ENCODE measurements at regions of chr2 and their contacts with region 1.

Region 1: DNA sequence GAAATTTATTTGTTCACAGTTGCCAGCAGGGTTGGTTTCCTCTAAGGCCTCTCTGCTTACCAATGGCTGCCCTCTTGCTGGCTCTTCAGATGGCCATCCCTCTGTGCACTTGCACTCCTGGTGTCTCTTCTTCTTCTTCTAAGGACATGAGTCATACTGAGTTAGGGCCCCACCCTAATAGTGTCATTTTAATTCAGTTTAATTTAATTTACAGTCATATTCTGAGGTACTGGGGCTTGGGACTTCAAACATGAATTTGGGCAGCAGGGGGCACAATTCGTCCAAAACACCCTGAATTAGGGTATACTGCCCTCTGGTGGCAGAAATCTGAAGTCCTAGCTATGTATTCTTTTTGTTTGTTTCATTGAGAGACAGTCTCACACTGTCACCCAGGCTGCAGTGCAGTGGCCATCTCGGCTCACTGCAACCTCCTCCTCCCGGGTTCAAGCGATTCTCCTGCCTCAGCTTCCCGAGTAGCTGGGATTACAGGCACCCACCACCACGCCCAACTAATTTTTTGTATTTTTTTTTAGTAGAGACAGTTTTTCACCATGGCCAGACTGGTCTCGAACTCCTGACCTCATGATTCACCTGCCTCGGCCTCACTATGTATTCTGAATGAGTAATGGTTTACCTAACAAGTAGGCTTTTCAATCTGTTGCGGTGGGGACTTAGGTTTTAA is 19.8 kb downstream of the SLC4A1AP start:
- DNase-seq: peak; percentile 97
- ATAC-seq: peak; percentile 96
- H3K4me3 ChIP-seq: no peak overlapping the region
- H3K27ac ChIP-seq: peak overlapping the region; percentile 7
- H3K4me1 ChIP-seq: peaks cover 11% of the 10 kb centered on the region
- H3K27me3 ChIP-seq: no peaks in the 10 kb centered on the region
- CTCF ChIP-seq: peak; percentile 97
- EP300 ChIP-seq: 0 out of 4 replicates have a peak, but pooled peaks of 1 of the 2 experiments have one; percentile 14
- POLR2A ChIP-seq: no peak
- RAD21 ChIP-seq: peak; percentile 82

Region 2: DNA sequence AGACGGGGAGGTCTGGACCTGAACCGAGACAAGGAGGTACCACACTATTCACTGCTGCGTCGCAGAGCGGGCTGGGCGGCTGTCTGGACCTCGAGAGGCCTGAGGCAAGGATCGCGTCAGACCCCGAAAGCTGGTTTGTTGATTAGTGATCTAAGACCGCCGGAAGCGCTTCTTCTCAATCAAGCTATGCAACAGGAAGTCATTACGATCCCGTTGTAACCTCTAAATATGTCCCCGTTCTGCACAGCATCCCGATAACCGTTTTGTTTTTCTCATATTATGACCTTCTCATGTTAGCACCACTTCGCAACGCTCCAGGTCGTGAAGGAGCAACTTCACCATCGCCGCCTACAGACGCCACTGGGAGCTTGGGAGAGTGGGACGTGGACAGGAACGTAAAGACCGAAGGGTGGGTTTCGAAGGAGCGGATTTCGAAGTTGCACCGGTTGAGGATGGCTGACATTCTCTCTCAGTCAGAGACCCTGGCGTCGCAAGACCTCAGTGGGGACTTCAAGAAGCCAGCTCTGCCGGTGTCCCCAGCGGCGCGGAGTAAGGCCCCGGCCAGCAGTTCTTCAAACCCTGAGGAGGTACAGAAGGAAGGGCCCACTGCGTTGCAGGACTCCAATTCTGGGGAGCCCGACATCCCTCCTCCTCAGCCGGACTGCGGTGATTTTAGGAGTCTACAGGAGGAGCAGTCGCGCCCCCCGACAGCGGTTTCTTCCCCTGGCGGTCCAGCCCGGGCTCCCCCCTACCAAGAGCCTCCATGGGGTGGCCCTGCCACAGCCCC is 19.9 kb before region 1 on chr2 and contains the starts of genes SLC4A1AP and SUPT7L:
- CTCF ChIA-PET with region 1: interaction called, 8 read pairs
- POLR2A ChIA-PET with region 1: interaction called, 11 read pairs
- in situ Hi-C with region 1: no loop called
- intact Hi-C with region 1: no loop called
- DNase-seq: peak; percentile 88
- ATAC-seq: peak; percentile 86
- H3K4me3 ChIP-seq: peak within 1 kb of the TSS; percentile 81 to 94 (median 84)
- H3K27ac ChIP-seq: peak within 1 kb of the TSS; percentile 83
- H3K4me1 ChIP-seq: peaks cover 28% of the 10 kb centered on the region
- H3K27me3 ChIP-seq: no peaks in the 10 kb centered on the region; a peak in 1 of 5 replicates
- CTCF ChIP-seq: peak; percentile 29
- EP300 ChIP-seq: no peak
- POLR2A ChIP-seq: peak; percentile 79 to 81
- RAD21 ChIP-seq: no peak
- total RNA-seq, gene SLC4A1AP: 44.6 and 59.0 TPM in 2 replicates
- total RNA-seq, gene SUPT7L: 28.7 and 32.9 TPM in 2 replicates